ENCODE measurements at regions of chr6 and their contacts with region 1.

Region 1: GRCh38 chr6:98834060-98835031 is at the start of gene POU3F2:
- DNase-seq: peak; percentile 56
- H3K4me3 ChIP-seq: peak within 1 kb of the TSS; percentile 32 to 51 (median 43)
- H3K27ac ChIP-seq: no peak within 1 kb of the TSS
- H3K4me1 ChIP-seq: peaks cover 38% of the 10 kb centered on the region
- H3K27me3 ChIP-seq: peaks cover 82% of the 10 kb centered on the region
- CTCF ChIP-seq: no peak
- total RNA-seq, gene POU3F2: not detected

Region 2: DNA sequence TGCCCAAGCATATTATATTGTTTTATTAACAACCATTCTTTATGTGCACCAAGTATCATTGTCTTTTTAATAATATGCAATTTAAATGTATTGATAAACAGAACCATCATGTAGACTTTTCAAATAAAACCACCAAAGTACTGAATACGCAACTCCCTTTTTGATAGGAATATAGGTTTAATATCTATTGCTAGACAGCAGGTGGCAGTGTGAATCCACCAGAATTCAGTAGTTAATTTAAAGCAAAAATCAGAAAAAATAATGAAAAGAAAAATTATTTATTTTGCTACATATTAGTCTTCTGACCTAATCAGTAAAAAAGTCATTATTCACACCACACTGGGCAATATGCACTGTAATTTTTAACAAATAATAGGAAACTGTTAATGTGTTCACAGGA is 1766.1 kb before region 1 on chr6:
- CTCF ChIA-PET with region 1: no interaction called
- dilution Hi-C with region 1: no loop called
- in situ Hi-C with region 1: no loop called
- intact Hi-C with region 1: loop called (anchors 10 kb)
- DNase-seq: peak; percentile 3
- H3K4me3 ChIP-seq: no peak overlapping the region
- H3K27ac ChIP-seq: no peak overlapping the region
- H3K4me1 ChIP-seq: no peaks in the 10 kb centered on the region
- H3K27me3 ChIP-seq: peaks cover 2% of the 10 kb centered on the region
- CTCF ChIP-seq: peak; percentile 41 to 58

Region 3: DNA sequence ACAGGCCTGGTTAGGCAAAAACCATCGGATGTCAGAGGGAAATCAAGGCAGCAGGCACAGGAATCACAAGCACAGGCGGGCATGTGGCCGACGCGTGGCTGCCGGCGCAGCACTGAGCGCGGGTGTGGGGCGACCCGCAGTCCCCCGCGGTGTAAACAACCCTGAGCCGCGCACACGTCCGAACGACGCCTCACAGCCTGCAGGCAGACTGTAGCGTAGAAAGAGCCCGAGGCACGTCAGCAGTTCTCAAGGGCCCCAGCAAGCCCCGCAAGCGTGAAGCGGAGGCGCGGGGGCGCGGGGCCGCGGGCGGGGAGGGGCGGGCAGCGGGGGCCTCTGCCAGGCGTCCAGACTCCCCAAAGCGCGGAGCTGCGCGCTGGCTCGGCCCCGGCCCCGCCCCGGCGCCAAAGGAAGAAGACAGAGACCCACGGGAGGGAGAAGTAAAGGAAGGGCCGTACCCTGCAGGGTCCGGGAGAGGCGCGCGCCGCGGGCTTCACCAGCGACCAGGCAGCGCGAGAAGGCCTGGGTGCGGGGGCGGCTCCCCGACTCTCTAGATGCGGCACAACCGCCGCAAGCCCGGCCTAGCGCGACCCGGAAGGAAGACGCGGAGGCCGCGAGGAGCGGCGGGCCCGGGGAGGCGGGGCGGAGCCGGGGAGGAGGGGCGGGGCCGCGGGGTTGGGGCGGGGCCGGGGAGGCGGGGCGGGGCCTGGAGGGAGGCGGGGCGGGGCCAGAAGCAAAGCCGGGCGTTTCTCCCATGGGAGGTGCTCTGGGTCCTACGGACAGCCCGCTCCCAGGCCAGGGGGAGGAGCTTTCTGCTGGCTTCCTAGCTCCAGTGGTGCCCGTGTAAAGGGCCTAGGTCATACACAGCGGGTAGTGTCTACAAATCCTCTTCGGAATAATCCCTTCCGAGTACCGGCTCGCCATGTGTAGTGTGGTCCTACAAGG is 113.3 kb after region 1 on chr6 and contains the start of gene FBXL4:
- CTCF ChIA-PET with region 1: no interaction called
- dilution Hi-C with region 1: no loop called
- in situ Hi-C with region 1: no loop called
- intact Hi-C with region 1: loop called (anchors 1 kb)
- DNase-seq: peak; percentile 73
- H3K4me3 ChIP-seq: peak within 1 kb of the TSS; percentile 79 to 96 (median 92)
- H3K27ac ChIP-seq: peak within 1 kb of the TSS; percentile 84
- H3K4me1 ChIP-seq: peaks cover 14% of the 10 kb centered on the region
- H3K27me3 ChIP-seq: no peaks in the 10 kb centered on the region
- CTCF ChIP-seq: no peak
- total RNA-seq, gene FBXL4: 15.7 to 15.8 TPM

Measured in mammary epithelial cell (primary cell).